HAP-1 (cell line): ENCODE measurements at regions of chr1 and their contacts with region 1.

Region 1: GRCh38 chr1:113057006-113057405 is 16.0 kb upstream of the LRIG2 start:
- DNase-seq: no peak
- H3K4me3 ChIP-seq: no peak overlapping the region
- H3K4me1 ChIP-seq: peaks cover 7% of the 10 kb centered on the region; the same call in 1 of the 2 replicates
- H3K27me3 ChIP-seq: no peaks in the 10 kb centered on the region

Region 2: GRCh38 chr1:112735752-112736151 is 321.3 kb before region 1 on chr1:
- in situ Hi-C with region 1: loop called (anchors 10 kb)
- DNase-seq: no peak
- H3K4me3 ChIP-seq: no peak overlapping the region
- H3K4me1 ChIP-seq: no peaks in the 10 kb centered on the region
- H3K27me3 ChIP-seq: peaks cover 13% of the 10 kb centered on the region